ENCODE measurements at regions of chr7 and their contacts with region 1.

Region 1: DNA sequence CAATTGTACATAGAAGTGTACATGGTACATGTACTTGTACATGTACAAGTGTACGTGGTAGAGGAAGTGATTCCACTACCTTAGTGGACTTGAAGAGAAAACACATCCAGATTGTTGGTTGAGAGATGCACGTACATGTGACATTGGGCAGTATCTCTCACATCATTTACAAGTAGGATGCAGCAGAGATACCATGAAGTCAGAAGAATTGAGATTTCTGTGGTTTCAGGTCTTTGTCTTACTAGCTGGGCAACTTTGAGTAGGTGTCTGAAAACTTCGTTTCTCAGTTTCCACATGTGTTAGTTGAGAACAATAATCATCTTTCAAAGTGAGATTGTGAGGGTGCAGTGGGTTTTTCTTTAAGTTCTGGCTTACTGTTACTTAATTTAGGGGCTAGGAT is 21.5 kb downstream of the CLDN12 start:
- DNase-seq: no peak
- ATAC-seq: no peak
- H3K4me3 Mint-ChIP-seq: no peak overlapping the region
- H3K27ac Mint-ChIP-seq: no peak overlapping the region
- H3K4me1 Mint-ChIP-seq: no peaks in the 10 kb centered on the region
- H3K27me3 Mint-ChIP-seq: no peaks in the 10 kb centered on the region
- CTCF ChIP-seq: no peak

Region 2: DNA sequence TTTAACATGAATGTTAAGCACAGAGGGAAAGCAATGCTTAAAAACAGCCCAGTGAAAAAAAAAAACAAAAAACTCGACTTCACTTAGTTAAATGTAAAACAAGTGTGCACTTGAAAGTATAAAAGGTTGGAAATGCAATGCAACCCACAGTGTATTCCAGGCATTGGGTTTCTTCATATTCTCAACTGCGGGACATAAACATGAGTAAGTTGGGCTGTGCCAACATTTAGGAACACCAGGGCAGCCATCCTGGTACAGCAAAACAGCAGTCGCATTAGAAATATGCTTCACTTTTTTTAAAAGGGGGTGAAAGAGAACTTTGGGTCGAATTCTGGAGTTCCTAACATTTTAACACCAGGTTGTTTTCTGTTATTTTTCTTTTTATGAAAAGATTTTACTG is 269.5 kb before region 1 on chr7:
- CTCF ChIA-PET with region 1: interaction called, 22 read pairs
- POLR2A ChIA-PET with region 1: no interaction called
- DNase-seq: no peak
- ATAC-seq: no peak
- H3K4me3 Mint-ChIP-seq: peak overlapping the region; percentile 72
- H3K27ac Mint-ChIP-seq: no peak overlapping the region
- H3K4me1 Mint-ChIP-seq: peaks cover 20% of the 10 kb centered on the region
- H3K27me3 Mint-ChIP-seq: peaks cover 22% of the 10 kb centered on the region
- CTCF ChIP-seq: no peak

Region 3: DNA sequence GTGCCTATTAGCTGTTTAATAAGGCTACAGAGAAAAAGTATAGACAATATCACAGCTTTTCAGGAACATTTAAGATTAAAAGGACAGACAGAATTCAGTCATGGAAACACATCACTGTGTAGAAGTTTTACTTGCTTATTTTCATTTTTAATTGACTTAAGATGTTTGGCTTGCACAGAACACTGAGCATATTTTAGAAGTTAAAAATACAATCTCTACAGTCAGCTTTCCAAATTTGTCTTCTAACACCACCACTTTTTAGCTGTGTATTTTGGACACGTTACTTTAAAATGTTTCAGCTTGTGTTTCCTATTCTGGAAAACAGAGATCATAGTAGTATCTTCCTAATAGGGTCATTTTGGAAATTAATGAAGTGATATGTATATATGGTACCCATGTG is 167.9 kb before region 1 on chr7:
- CTCF ChIA-PET with region 1: no interaction called
- POLR2A ChIA-PET with region 1: no interaction called
- DNase-seq: no peak
- ATAC-seq: no peak
- H3K4me3 Mint-ChIP-seq: no peak overlapping the region
- H3K27ac Mint-ChIP-seq: no peak overlapping the region
- H3K4me1 Mint-ChIP-seq: no peaks in the 10 kb centered on the region
- H3K27me3 Mint-ChIP-seq: no peaks in the 10 kb centered on the region
- CTCF ChIP-seq: no peak

Region 4: DNA sequence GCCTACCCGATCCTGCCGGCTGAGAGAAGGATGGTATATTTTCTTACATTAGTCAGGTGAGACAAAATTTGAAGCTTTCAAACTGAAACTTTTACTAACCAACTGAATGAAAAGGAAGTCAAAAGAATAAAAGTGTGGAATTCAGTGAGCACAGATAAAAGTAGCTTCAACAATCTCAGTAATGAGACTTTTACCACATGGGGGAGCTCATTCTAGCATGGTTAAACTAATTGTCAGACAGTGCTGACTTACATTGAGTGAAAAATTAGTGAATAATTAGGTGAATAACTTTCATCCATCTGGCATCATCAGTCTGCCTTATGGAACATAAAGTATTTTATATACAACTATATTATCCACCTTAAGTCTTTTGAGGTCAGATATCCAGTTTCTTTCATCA is 112.0 kb before region 1 on chr7:
- CTCF ChIA-PET with region 1: interaction called, 39 read pairs
- POLR2A ChIA-PET with region 1: no interaction called
- DNase-seq: no peak
- ATAC-seq: peak; percentile 59; the same call in 1 of the 2 replicates
- H3K4me3 Mint-ChIP-seq: no peak overlapping the region
- H3K27ac Mint-ChIP-seq: no peak overlapping the region
- H3K4me1 Mint-ChIP-seq: no peaks in the 10 kb centered on the region
- H3K27me3 Mint-ChIP-seq: peaks cover 3% of the 10 kb centered on the region
- CTCF ChIP-seq: no peak

Region 5: DNA sequence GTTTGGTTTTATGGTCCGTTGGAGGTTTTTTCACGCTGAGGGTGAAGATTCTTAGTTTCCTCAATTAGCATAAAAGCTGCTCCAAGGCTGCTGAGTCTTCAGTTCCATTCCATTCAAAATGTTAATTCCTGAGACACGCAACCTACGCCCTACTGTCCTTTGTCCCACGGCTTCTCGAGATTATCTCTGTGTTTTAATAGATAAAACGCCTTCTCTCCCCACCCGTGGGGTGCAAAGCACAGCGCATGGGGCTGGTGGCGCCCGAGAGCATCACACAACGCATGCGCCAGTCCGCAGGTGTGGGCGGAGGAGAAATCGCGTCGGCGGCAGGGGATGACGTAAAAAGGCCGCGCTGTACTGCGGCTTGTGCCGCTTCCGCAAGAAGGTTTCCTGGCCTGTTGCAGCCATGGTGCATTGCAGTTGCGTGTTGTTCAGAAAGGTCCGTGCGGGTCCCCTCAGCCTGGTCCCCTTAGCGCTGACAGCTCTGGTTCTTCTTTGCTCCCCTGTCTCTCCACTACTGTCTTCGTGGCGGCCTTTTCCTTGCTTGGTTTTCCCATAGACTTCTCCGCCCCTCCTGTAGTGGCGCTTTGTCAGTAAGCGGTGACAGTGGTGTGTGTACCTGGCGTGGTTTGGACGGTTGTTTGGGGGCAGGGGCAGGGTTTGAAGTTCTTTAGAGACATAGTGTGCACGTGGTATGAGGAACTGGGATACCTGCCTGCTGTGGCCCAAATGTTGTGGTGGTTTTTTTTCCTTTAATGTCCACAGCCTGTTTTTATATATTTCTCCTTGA is 78.2 kb before region 1 on chr7 and contains the start of gene GTPBP10:
- CTCF ChIA-PET with region 1: interaction called, 15 read pairs
- POLR2A ChIA-PET with region 1: no interaction called
- DNase-seq: peak; percentile 90
- ATAC-seq: peak; percentile 95
- H3K4me3 Mint-ChIP-seq: peak within 1 kb of the TSS; percentile 91
- H3K27ac Mint-ChIP-seq: peak within 1 kb of the TSS; percentile 89
- H3K4me1 Mint-ChIP-seq: peaks cover 9% of the 10 kb centered on the region
- H3K27me3 Mint-ChIP-seq: no peaks in the 10 kb centered on the region
- CTCF ChIP-seq: 0 out of 2 replicates have a peak, but pooled peaks have one; percentile 37
- total RNA-seq, gene GTPBP10: 18.5 to 20.1 TPM (median 19.6 TPM) in 3 replicates

Region 6: GRCh38 chr7:90412458-90413184 is 12.1 kb before region 1 on chr7:
- CTCF ChIA-PET with region 1: interaction called, 17 read pairs
- POLR2A ChIA-PET with region 1: no interaction called
- DNase-seq: peak; percentile 54
- ATAC-seq: peak; percentile 94
- H3K4me3 Mint-ChIP-seq: no peak overlapping the region
- H3K27ac Mint-ChIP-seq: 0 out of 2 replicates have a peak overlapping the region, but pooled peaks have one; percentile 12
- H3K4me1 Mint-ChIP-seq: no peaks in the 10 kb centered on the region
- H3K27me3 Mint-ChIP-seq: no peaks in the 10 kb centered on the region
- CTCF ChIP-seq: no peak

Region 7: GRCh38 chr7:90483251-90483650 is 58.5 kb after region 1 on chr7:
- CTCF ChIA-PET with region 1: no interaction called
- POLR2A ChIA-PET with region 1: no interaction called
- DNase-seq: no peak
- ATAC-seq: no peak
- H3K4me3 Mint-ChIP-seq: no peak overlapping the region
- H3K27ac Mint-ChIP-seq: no peak overlapping the region
- H3K4me1 Mint-ChIP-seq: peaks cover 2% of the 10 kb centered on the region; the same call in 1 of the 2 replicates
- H3K27me3 Mint-ChIP-seq: peaks cover 2% of the 10 kb centered on the region; the same call in 1 of the 2 replicates
- CTCF ChIP-seq: no peak